Activated CD4-positive, alpha-beta T cell treated with anti-CD3 and anti-CD28 coated beads for 36 hours (primary cell): ENCODE measurements at regions of chr14 and their contacts with region 1.

Region 1: GRCh38 chr14:22872033-22872832 is 693 bp downstream of the LRP10 start:
- DNase-seq: peak; percentile 84
- ATAC-seq: peak; percentile 13
- H3K4me3 Mint-ChIP-seq: peak overlapping the region; percentile 88
- H3K27ac Mint-ChIP-seq: peak overlapping the region; percentile 91
- H3K4me1 Mint-ChIP-seq: peaks cover 37% of the 10 kb centered on the region
- H3K27me3 Mint-ChIP-seq: no peaks in the 10 kb centered on the region

Region 2: DNA sequence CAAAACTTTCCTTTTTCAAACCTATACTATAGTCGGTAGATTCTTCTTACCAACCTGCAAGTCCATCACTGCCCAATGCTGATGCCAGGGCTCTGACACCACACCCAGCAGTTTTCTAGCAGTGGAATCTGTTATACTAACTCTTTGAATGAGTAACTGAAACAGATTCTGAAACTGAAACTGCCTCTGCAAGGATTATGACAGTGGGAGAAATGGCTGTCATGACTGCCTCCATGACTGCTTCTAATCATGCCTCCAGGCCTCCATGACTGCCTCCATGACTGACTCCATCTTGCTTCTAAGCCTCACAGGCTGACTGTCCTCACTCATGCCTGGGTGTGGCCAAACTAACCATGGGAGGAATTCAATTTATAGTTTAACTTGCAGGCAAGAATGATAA is 135.2 kb before region 1 on chr14:
- CTCF ChIA-PET with region 1: no interaction called
- POLR2A ChIA-PET with region 1: interaction called, 3 read pairs
- intact Hi-C with region 1: loop called in 1 of 2 experiments (anchors 1 kb)
- DNase-seq: peak; percentile 76
- ATAC-seq: peak; percentile 97
- H3K4me3 Mint-ChIP-seq: no peak overlapping the region
- H3K27ac Mint-ChIP-seq: peak overlapping the region; percentile 79
- H3K4me1 Mint-ChIP-seq: peaks cover 12% of the 10 kb centered on the region
- H3K27me3 Mint-ChIP-seq: peaks cover 4% of the 10 kb centered on the region

Region 3: DNA sequence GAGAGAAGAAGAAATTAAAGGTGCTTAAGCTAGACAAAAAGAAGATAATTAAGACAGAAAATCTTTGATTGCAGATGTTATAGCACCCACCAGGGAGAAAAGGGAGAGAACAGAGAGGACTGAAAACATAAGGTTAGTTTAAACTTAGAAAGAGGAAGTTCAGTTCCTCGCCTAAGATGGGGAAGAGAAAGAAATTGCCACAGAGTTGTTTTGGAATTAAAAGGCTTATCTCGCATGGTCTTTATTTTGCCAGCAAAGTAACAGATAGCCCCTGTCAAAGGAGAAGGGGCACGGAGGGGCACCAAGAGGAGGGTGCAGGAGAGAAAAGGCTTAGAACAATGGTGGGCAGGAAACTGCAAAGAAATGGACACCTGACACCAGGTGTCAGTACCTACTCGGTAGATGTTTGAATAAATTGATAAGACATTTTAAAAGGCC is 123.6 kb before region 1 on chr14:
- CTCF ChIA-PET with region 1: no interaction called
- POLR2A ChIA-PET with region 1: no interaction called
- intact Hi-C with region 1: no loop called
- DNase-seq: no peak
- ATAC-seq: no peak
- H3K4me3 Mint-ChIP-seq: no peak overlapping the region
- H3K27ac Mint-ChIP-seq: no peak overlapping the region
- H3K4me1 Mint-ChIP-seq: peaks cover 7% of the 10 kb centered on the region
- H3K27me3 Mint-ChIP-seq: peaks cover 22% of the 10 kb centered on the region

Region 4: GRCh38 chr14:22829661-22830442 is 42.4 kb before region 1 on chr14 and contains the start of gene MRPL52:
- CTCF ChIA-PET with region 1: interaction called, 3 read pairs
- POLR2A ChIA-PET with region 1: no interaction called
- intact Hi-C with region 1: loop called (anchors 1 kb)
- DNase-seq: peak; percentile 94
- ATAC-seq: peak; percentile 92
- H3K4me3 Mint-ChIP-seq: peak within 1 kb of the TSS; percentile 82
- H3K27ac Mint-ChIP-seq: peak within 1 kb of the TSS; percentile 98
- H3K4me1 Mint-ChIP-seq: peaks cover 26% of the 10 kb centered on the region
- H3K27me3 Mint-ChIP-seq: no peaks in the 10 kb centered on the region
- total RNA-seq, gene MRPL52: 115 to 136 TPM

Region 5: DNA sequence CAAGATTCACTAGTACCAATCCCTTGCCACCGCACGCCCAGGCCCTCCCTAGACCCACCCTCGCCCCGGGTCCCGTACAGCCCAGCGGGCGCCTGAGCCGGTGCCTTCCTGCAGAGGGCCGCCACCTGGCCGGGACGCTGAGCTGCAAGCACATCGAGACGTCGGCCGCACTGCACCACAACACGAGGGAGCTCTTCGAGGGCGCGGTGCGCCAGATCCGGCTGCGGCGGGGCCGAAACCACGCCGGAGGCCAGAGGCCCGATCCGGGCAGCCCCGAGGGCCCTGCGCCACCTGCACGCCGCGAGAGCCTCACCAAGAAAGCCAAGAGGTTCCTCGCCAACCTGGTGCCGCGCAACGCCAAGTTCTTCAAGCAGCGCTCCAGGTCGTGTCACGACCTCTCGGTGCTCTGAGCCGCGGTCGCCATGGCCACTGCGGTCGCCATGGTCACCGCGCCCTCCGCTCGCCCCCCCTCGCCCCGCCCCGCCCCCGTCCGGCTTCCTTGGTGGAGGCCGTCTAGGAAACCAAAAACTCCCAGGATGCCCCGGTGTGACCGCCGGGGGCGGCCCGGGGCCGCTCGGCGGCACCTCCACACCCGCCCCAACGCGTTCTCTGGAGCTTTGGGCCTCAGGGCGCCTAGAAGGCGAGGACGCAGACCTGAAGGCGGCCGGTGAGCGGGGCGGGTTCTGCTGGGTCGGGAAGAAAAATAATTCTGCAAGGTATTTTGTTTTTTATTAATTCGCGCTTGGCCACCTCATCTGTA is 14.4 kb after region 1 on chr14:
- CTCF ChIA-PET with region 1: interaction called, 111 read pairs
- POLR2A ChIA-PET with region 1: interaction called, 4 read pairs
- intact Hi-C with region 1: loop called (anchors 1 to 2 kb)
- DNase-seq: peak; percentile 85
- ATAC-seq: peak; percentile 63
- H3K4me3 Mint-ChIP-seq: peak overlapping the region; percentile 70
- H3K27ac Mint-ChIP-seq: peak overlapping the region; percentile 83
- H3K4me1 Mint-ChIP-seq: peaks cover 50% of the 10 kb centered on the region
- H3K27me3 Mint-ChIP-seq: peaks cover 2% of the 10 kb centered on the region

Region 6: DNA sequence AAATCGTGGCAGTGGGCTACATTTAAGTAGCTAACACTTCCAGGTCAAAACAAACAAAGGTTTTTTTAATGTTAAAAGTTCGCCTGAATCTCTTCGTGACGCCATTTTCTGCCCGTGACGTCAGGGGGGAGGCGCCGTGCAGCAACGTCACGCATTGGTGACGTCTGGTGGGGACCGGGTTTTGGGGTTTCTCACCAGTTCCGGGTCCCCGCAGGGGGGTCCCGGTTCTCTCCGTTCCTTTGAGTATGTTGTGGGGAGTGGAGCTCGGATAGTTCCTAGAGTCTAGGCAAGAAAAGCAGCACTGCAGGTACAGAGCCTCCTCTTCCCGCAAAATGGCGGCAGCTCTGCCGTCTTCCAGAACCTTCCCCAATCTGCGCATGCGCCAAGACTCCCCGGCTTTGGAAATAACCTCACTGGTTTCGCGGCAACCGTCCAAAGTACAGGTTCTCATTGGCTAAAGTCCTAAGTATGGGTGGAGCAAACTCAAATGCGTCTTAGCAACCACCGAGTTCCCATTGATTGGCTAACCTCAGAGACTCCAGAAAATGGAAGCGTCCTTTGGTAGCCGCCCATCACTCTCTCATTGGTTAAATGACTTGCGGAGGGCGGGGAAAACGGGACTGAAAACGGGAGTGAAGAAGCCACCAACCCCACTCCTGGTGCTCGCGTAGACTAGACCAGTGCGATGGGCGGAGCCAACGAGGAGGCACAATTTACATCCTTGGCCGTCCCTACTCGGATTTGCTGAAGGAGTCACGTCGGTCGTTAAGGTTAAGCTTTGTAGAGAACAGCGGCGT is 46.8 kb after region 1 on chr14 and contains the start of gene RBM23:
- CTCF ChIA-PET with region 1: interaction called, 10 read pairs
- POLR2A ChIA-PET with region 1: interaction called, 4 read pairs
- intact Hi-C with region 1: loop called (anchors 1 kb)
- DNase-seq: peak; percentile 100
- ATAC-seq: peak; percentile 97
- H3K4me3 Mint-ChIP-seq: peak within 1 kb of the TSS; percentile 92
- H3K27ac Mint-ChIP-seq: peak within 1 kb of the TSS; percentile 99
- H3K4me1 Mint-ChIP-seq: peaks cover 40% of the 10 kb centered on the region
- H3K27me3 Mint-ChIP-seq: no peaks in the 10 kb centered on the region
- total RNA-seq, gene RBM23: 61.6 to 68.6 TPM

Region 7: GRCh38 chr14:22955702-22956569 is 83.7 kb after region 1 on chr14:
- CTCF ChIA-PET with region 1: no interaction called
- POLR2A ChIA-PET with region 1: no interaction called
- intact Hi-C with region 1: loop called in 1 of 2 experiments (anchors 1 kb)
- DNase-seq: no peak
- ATAC-seq: no peak
- H3K4me3 Mint-ChIP-seq: peak overlapping the region; percentile 88
- H3K27ac Mint-ChIP-seq: peak overlapping the region; percentile 90
- H3K4me1 Mint-ChIP-seq: peaks cover 18% of the 10 kb centered on the region
- H3K27me3 Mint-ChIP-seq: no peaks in the 10 kb centered on the region

Region 8: DNA sequence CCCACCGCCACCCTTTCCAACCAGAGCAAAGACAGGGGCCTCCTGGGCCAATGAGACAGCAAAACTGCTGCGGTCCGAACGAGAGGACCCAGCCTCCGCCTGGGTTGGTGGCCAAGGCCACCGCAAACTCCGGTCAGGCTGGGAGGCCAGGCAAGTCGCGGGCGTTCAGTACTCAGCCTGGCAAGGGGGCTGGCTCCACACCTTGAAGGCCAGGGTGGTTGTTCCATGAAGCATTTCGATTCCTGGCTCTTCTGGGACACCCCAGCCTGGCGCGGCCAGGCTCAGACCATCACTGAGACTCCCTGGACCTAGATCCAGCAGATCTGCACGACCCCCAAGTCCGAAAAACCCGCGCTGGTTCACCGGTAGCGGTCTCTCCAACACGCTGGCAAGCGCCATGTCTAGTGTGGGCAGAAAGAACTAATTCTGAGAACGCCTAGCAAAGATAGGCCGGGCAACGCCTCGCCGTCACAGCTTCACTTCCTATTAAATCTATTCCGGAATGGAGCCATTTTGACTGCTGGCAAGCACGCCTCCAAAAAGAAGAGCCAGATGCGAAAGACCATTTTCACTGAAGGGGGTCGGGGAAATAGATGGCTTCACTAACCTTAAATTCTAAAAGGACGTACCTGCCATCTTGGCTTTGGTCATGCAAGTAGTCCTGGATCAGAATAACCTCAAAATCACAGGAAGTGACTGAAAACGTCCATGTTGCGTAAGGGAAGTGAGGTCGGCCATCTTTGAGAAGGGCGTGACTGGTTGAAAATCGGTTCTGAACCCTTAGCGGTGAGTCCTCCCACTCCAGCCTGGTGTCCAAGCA is 162.5 kb after region 1 on chr14 and contains the start of gene PSMB5:
- CTCF ChIA-PET with region 1: no interaction called
- POLR2A ChIA-PET with region 1: no interaction called
- intact Hi-C with region 1: loop called in 1 of 2 experiments (anchors 1 kb)
- DNase-seq: peak; percentile 94
- ATAC-seq: peak; percentile 95
- H3K4me3 Mint-ChIP-seq: peak within 1 kb of the TSS; percentile 97
- H3K27ac Mint-ChIP-seq: peak within 1 kb of the TSS; percentile 97
- H3K4me1 Mint-ChIP-seq: peaks cover 36% of the 10 kb centered on the region
- H3K27me3 Mint-ChIP-seq: no peaks in the 10 kb centered on the region
- total RNA-seq, gene PSMB5: 104 to 129 TPM